ENCODE measurements at regions of chr16 and their contacts with region 1.

Region 1: DNA sequence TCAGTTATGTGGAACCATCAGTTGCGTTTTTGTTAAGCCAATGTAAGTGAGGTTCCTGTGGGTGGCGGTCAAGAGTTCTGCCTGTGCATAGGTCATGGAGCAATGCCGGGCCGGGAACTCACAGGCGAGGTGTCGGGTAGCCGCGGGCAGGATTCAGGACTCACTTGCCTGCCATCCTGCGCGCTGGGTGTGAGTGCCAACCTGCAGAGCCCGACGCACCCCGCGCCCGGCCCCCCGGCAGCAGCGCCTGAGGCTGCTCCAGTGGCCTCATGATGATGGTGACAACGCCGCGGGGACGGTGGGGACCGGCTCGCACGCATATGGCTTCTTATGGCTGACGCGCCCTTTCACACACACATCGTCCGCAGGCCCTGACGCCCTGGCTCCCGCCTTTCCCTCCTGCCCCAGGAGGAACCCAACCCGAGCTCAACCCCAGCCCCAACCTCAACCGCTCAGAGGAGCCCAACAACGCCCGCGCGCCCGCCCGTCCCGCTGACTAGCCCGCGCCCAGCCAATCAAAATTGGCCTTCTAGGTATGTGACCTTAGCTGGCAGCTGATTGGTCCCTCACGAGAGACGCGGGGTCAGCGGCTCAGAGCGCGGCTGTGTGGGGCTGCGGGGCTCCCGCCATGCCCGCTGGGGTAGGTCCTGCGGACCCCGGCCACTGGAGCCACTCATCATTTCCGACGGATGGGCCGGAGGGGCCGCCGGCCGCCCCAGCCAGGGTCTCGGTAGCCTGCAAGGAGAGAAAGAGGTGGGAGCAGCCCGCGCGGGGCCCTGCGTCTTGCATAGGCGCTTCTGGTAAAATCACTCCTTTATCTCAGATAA is at the start of gene C16orf95:
- DNase-seq: peak; percentile 96
- H3K4me3 ChIP-seq: peak within 1 kb of the TSS; percentile 88 to 99
- H3K27ac ChIP-seq: peak within 1 kb of the TSS; percentile 80 to 90
- H3K4me1 ChIP-seq: peaks cover 6% of the 10 kb centered on the region
- H3K27me3 ChIP-seq: no peaks in the 10 kb centered on the region
- CTCF ChIP-seq: peak in 3 of 4 experiments; percentile 30 to 67 (median 64)
- POLR2A ChIP-seq: peak; percentile 77
- total RNA-seq, gene C16orf95: 0.91 to 8.0 TPM

Region 2: GRCh38 chr16:86984991-86985647 is 332.0 kb before region 1 on chr16:
- intact Hi-C with region 1: no loop called
- DNase-seq: no peak
- H3K4me3 ChIP-seq: no peak overlapping the region
- H3K27ac ChIP-seq: no peak overlapping the region
- H3K4me1 ChIP-seq: no peaks in the 10 kb centered on the region
- H3K27me3 ChIP-seq: no peaks in the 10 kb centered on the region
- CTCF ChIP-seq: no peak
- POLR2A ChIP-seq: no peak

Region 3: DNA sequence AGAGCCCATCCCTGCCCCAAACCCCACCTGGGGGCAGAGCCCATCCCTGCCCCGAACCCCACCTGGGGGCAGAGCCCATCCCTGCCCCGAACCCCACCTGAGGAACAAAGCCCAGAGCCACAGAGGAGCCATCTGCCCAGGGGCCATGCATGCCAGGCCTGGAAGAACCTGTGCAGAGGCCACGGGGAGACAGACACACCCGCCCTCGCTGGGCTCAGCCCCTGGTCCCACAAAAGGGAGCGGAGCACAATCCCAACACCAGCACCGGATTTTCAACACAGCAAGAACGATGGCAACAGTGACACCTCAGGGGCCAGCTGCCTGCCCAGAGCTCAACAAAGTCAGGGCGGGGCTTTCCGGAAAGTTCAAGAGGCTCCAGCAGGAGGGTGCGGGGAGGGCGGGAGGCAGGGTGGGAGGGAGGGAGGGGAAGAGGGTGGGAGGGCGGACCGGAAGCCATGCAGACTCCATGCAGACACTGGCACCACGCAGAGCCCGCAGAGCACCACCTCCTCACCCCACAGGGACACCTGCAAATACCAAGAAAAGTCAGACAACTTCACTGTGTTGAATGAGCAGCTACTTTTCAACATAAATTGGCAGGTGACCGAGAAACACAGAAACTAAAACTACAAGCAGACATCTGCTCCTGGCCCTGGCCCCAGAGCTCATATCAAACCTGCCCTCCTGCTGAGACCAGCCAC is 27.9 kb after region 1 on chr16:
- intact Hi-C with region 1: no loop called
- DNase-seq: no peak
- H3K4me3 ChIP-seq: no peak overlapping the region
- H3K27ac ChIP-seq: no peak overlapping the region
- H3K4me1 ChIP-seq: no peaks in the 10 kb centered on the region
- H3K27me3 ChIP-seq: no peaks in the 10 kb centered on the region
- CTCF ChIP-seq: no peak
- POLR2A ChIP-seq: no peak

Region 4: DNA sequence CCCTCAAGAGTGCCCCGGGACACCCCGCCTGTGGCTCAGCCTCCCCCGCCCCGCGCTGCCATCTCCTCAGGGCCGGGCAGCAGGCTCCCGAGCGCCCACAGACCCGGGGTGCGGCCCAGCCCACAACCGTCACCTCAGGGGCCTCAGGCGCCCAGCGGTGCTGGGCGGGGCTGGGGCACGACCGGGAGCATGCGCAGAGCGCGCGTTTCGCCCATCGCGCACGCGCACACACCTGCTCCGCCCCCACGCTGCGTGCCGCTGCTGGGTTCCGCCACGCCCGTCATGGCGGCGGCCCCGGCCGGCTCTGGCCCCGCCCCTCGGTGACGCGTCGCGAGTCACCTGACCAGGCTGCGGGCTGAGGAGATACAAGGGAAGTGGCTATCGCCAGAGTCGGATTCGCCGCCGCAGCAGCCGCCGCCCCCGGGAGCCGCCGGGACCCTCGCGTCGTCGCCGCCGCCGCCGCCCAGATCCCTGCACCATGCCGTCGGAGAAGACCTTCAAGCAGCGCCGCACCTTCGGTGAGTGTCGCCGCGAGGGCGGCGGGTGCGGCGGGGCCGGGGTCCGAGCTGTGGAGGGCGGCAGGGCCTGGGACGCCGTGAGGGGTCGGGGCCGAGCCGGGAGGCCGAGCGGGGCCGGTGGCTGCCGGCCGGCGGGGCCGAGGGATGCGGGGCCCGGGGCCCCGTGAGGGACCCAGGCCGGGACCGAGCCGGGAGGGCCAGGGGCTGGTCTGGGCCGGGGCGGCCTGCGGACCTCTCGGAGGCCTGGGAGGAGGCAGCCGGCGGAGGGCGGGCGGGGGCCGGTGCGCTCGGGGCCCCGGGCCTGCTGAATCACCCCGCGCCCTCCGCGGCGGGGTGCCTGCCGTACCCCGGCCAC is 75.0 kb after region 1 on chr16 and contains the start of gene MAP1LC3B:
- intact Hi-C with region 1: loop called (anchors 2 kb)
- DNase-seq: peak; percentile 95
- H3K4me3 ChIP-seq: peak within 1 kb of the TSS; percentile 72 to 90
- H3K27ac ChIP-seq: peak within 1 kb of the TSS; percentile 87 to 96
- H3K4me1 ChIP-seq: peaks cover 12% of the 10 kb centered on the region
- H3K27me3 ChIP-seq: no peaks in the 10 kb centered on the region
- CTCF ChIP-seq: peak in 1 of 4 experiments; percentile 30
- POLR2A ChIP-seq: peak; percentile 100
- total RNA-seq, gene MAP1LC3B: 41.9 to 51.8 TPM

Region 5: GRCh38 chr16:87492721-87493607 is 175.8 kb after region 1 on chr16 and contains the start of gene ZCCHC14:
- intact Hi-C with region 1: loop called (anchors 10 kb)
- DNase-seq: peak; percentile 99
- H3K4me3 ChIP-seq: peak within 1 kb of the TSS; percentile 47 to 49
- H3K27ac ChIP-seq: peak within 1 kb of the TSS; percentile 8 to 64
- H3K4me1 ChIP-seq: peaks cover 21% of the 10 kb centered on the region
- H3K27me3 ChIP-seq: no peaks in the 10 kb centered on the region
- CTCF ChIP-seq: peak in 1 of 4 experiments; percentile 16
- POLR2A ChIP-seq: peak; percentile 73
- total RNA-seq, gene ZCCHC14: 14.9 to 55.7 TPM

Region 6: DNA sequence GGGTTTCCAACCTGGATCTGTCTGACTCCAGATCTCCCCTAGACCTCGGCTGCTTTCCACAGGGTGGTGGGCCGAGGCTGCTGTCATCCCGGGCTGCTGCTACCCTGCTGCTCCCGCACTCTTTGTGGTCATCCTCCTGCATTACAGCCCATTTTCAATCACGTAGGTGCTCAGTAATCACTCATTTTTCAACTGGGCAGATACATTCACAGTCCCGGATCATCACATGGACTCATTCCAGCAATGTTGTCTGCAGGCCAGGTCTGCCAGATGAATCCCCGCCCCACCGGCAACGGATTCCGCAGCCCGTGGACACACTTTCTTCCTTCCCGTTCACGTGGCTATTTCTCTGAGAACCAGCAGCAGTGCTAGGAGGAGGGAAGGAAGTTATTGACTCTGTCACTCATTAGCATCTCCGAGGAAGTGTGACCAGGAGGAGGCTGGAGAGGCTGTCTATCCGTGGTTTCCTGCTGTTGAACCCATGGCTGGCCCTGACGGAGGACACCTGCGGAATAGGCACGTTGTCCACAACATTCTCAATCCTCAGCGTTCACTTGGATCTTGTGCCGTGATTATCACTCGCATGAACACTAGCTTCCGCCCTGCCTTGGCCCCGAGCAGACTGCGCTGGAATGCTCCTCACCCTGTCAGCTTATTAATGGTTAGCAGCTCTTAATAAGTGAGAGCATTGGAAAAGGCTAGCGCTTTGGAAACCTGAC is 190.4 kb after region 1 on chr16:
- intact Hi-C with region 1: no loop called
- DNase-seq: no peak
- H3K4me3 ChIP-seq: no peak overlapping the region
- H3K27ac ChIP-seq: no peak overlapping the region
- H3K4me1 ChIP-seq: no peaks in the 10 kb centered on the region
- H3K27me3 ChIP-seq: no peaks in the 10 kb centered on the region
- CTCF ChIP-seq: no peak
- POLR2A ChIP-seq: no peak

Region 7: GRCh38 chr16:88170528-88170991 is 853.4 kb after region 1 on chr16:
- intact Hi-C with region 1: no loop called
- DNase-seq: peak; percentile 54
- H3K4me3 ChIP-seq: no peak overlapping the region
- H3K27ac ChIP-seq: no peak overlapping the region
- H3K4me1 ChIP-seq: no peaks in the 10 kb centered on the region
- H3K27me3 ChIP-seq: no peaks in the 10 kb centered on the region
- CTCF ChIP-seq: no peak
- POLR2A ChIP-seq: no peak

Measured in prostate gland (tissue), 2 donors.